PC-9 (cell line): ENCODE measurements at regions of chr12 and their contacts with region 1.

Region 1: DNA sequence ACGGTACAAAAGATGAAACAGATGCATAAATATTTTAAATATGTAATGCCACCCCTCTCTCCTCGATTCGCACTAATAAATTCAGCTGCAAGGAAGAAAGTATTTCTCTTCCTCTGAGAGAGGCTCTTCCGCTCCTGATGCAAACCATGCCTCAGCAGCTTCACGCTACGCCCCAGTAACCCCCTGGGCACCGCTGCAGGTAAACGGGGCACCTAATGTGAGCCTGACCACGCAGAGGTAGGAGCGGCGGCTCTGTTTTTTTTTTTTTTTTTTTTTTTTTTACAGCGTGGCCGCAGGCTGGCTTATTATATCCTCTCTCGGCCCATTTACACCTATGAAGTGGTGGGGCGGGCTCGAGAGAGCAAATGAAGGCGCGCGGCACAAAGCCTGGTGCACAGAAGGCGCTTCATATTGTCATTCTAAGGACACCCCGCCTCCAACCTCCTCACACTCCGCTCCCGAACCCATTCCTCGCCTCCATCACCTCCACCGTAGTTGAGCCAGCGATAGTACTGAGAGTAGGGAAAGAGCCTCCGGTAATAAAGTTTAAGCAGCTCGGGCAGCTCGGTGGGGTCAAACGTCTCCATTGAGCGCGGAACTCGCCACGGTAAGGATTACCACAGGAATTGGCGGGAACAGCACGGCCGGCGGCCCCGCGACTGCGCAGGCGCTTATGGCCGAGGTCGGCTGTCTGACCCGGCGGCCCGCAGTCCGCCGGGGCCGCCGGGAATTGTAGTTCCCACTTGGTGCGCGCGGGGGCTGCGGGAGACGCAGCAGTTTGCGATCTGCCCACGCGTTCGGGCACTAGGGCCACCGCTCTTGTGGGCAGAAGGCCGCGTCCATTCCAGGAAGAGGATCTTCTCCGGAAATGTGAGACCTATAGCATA is at the start of gene PRIM1:
- DNase-seq: peak; percentile 71 to 85
- H3K4me3 ChIP-seq: peak within 1 kb of the TSS; percentile 66
- H3K27ac ChIP-seq: peak within 1 kb of the TSS; percentile 21
- H3K4me1 ChIP-seq: peaks cover 8% of the 10 kb centered on the region; the same call in 1 of the 2 replicates
- H3K27me3 ChIP-seq: no peaks in the 10 kb centered on the region
- CTCF ChIP-seq: peak; percentile 58
- total RNA-seq, gene PRIM1: 27.2 and 35.8 TPM in 2 replicates

Region 2: GRCh38 chr12:56679834-56680575 is 72.0 kb before region 1 on chr12:
- CTCF ChIA-PET with region 1: no interaction called
- POLR2A ChIA-PET with region 1: no interaction called
- intact Hi-C with region 1: no loop called
- DNase-seq: no peak
- H3K4me3 ChIP-seq: no peak overlapping the region
- H3K27ac ChIP-seq: no peak overlapping the region
- H3K4me1 ChIP-seq: peaks cover 23% of the 10 kb centered on the region
- H3K27me3 ChIP-seq: no peaks in the 10 kb centered on the region
- CTCF ChIP-seq: no peak

Region 3: GRCh38 chr12:56724972-56725722 is 26.8 kb before region 1 on chr12 and contains the start of gene NACA:
- CTCF ChIA-PET with region 1: no interaction called
- POLR2A ChIA-PET with region 1: interaction called, 12 read pairs
- intact Hi-C with region 1: no loop called
- DNase-seq: peak; percentile 94 to 95
- H3K4me3 ChIP-seq: peak within 1 kb of the TSS; percentile 99
- H3K27ac ChIP-seq: peak within 1 kb of the TSS; percentile 94
- H3K4me1 ChIP-seq: peaks cover 39% of the 10 kb centered on the region
- H3K27me3 ChIP-seq: no peaks in the 10 kb centered on the region
- CTCF ChIP-seq: no peak
- total RNA-seq, gene NACA: 812 and 1,035 TPM in 2 replicates

Region 4: GRCh38 chr12:56987551-56988053 is 235.6 kb after region 1 on chr12:
- CTCF ChIA-PET with region 1: interaction called, 14 read pairs
- POLR2A ChIA-PET with region 1: no interaction called
- intact Hi-C with region 1: loop called (anchors 1 kb)
- DNase-seq: peak in 1 of 2 experiments; percentile 66
- H3K4me3 ChIP-seq: no peak overlapping the region
- H3K27ac ChIP-seq: no peak overlapping the region
- H3K4me1 ChIP-seq: peaks cover 12% of the 10 kb centered on the region
- H3K27me3 ChIP-seq: no peaks in the 10 kb centered on the region
- CTCF ChIP-seq: peak; percentile 95

Region 5: DNA sequence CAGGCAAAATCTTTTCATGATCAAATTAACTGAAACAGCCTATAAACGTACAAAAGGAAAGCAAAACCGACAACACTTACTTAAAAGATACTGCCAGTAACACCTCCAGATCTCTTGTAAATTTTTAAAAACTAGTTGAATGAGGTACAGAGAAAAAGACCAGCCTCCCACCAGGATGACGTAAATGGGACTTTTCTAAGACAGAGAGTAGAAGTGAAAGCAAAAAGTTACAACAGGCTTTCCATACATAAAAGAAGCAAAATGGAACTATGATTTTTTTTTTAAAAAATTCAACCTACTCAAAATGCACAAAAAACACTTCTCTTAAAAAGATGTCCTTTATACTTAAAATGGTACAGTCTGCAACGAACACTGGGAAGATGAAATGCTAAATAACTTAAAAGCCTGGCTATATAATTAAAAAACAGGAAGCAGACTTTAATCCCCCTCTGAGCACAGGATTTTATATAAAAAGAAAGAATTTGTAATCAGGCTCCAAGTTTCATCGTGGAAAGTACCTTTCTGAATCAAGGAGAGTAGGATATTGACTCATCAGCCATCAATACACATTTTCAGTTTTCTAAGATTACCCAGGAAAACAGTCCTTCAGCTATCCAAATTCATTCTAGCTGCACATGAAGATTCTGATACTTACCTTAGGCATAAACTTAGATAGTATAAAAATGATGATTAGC is 312.2 kb after region 1 on chr12:
- CTCF ChIA-PET with region 1: interaction called, 5 read pairs
- POLR2A ChIA-PET with region 1: no interaction called
- intact Hi-C with region 1: loop called (anchors 2 kb)
- DNase-seq: no peak
- H3K4me3 ChIP-seq: no peak overlapping the region
- H3K27ac ChIP-seq: no peak overlapping the region
- H3K4me1 ChIP-seq: no peaks in the 10 kb centered on the region
- H3K27me3 ChIP-seq: no peaks in the 10 kb centered on the region
- CTCF ChIP-seq: no peak

Region 6: GRCh38 chr12:57238854-57239554 is 487.0 kb after region 1 on chr12:
- CTCF ChIA-PET with region 1: no interaction called
- POLR2A ChIA-PET with region 1: no interaction called
- intact Hi-C with region 1: loop called (anchors 10 kb)
- DNase-seq: peak; percentile 48 to 89
- H3K4me3 ChIP-seq: peak overlapping the region; percentile 51; the same call in 1 of the 2 replicates
- H3K27ac ChIP-seq: no peak overlapping the region
- H3K4me1 ChIP-seq: peaks cover 22% of the 10 kb centered on the region; the same call in 1 of the 2 replicates
- H3K27me3 ChIP-seq: peaks cover 30% of the 10 kb centered on the region
- CTCF ChIP-seq: peak; percentile 97